ENCODE measurements at regions of chr12 and their contacts with region 1.

Region 1: DNA sequence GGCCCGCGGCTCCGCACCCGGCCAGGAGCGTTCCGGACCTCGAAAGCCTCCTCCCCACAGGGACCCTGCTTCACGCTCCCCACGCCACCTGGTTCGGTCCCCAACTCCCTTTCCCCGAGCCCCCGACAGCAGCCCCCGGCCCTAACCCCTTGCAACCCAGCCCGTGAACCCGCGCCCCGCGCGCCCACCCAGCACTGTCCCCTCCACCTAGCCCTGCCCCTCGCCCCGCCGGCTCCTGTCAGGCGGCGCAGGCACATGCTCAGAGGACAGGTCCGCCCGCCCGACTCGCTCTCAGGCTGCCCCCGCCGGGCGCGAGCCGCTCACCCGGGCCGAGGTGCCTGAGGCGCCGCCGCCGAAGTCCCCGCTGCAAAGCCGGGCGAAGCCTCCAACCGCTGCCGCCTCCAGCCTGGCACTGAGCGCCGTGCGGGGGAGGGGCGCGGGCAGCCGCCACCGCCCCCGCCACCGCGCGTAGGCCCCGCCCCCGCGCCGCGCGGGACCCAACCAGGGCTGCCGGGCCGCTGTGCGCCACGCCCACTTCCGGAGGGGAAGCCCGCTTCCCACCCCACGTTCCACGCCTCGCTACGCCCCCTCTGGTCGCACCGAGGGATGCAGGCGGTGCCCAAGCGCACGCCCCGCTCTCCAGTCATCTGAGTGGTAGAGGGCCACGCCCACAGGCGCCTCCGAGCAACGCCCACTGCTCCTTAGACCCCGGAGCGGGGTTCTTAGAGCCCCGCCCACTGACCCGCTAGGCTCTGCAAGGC is at the start of gene CORO1C:
- DNase-seq: peak; percentile 97 to 99 (median 98)
- H3K4me3 ChIP-seq: peak within 1 kb of the TSS; percentile 79 to 92 (median 88)
- H3K4me3 Mint-ChIP-seq: peak within 1 kb of the TSS; percentile 97
- H3K27ac ChIP-seq: peak within 1 kb of the TSS; percentile 92 to 99
- H3K27ac Mint-ChIP-seq: peak within 1 kb of the TSS; percentile 98 to 100 (median 99)
- H3K4me1 ChIP-seq: peaks cover 67 to 83% of the 10 kb centered on the region in 2 donors
- H3K4me1 Mint-ChIP-seq: peaks cover 73% of the 10 kb centered on the region
- H3K27me3 ChIP-seq: no peaks in the 10 kb centered on the region
- H3K27me3 Mint-ChIP-seq: peaks cover 0 to 3% (median 2%) of the 10 kb centered on the region in 3 donors
- CTCF ChIP-seq: peak; percentile 97
- polyA plus RNA-seq, gene CORO1C: 77.5 to 285 (median 229) TPM

Region 2: DNA sequence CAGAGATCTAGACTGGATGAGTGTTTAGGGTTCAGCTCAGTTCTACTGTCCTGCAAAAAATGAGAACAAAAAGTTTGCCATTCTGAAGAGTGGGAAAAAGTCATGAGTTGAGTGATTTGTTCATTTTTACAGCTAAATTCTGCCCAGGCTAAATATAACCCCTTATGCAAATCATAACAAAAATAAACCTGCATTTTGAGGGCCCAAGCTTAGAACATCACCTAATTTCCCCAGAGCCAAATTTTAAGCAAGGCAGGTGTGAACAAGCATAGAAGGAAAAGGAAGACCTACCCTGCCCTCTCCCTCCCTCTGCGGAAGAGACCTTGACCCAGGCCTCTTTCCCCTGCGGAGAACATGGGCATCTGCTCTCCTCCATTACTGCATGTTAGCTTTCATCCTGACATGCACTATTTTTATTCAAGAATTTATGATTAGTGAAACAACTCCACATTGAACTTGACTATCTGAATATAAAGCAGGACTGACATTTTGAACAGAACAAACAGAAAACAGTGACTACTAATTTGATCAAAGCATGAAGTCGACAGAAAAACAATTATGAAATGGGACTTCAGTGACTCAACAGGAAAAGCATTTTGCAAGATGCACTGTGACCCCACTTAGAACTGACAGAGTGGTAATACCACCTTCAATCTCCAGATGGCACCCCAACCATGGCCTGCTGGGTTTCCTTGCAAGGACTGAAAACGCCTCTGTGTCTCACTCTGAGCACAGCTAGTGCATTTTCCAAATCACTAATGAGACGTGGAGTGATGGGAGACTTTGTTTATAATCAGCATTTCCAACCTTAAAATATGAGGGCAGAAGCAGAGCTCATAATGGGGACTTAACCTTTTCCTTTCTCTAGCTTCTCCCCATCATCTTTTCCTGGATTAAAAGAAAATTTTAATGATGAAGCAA is 66.7 kb before region 1 on chr12:
- intact Hi-C with region 1: loop called in 1 of 2 experiments (anchors 5 kb)
- DNase-seq: peak; percentile 95 to 97 (median 95)
- H3K4me3 ChIP-seq: peak overlapping the region; percentile 5 to 67 (median 43)
- H3K4me3 Mint-ChIP-seq: peak overlapping the region; percentile 61 to 86
- H3K27ac ChIP-seq: peak overlapping the region; percentile 88 to 95
- H3K27ac Mint-ChIP-seq: peak overlapping the region; percentile 97 to 99 (median 99)
- H3K4me1 ChIP-seq: peaks cover 54 to 61% of the 10 kb centered on the region in 2 donors
- H3K4me1 Mint-ChIP-seq: peaks cover 59% of the 10 kb centered on the region
- H3K27me3 ChIP-seq: no peaks in the 10 kb centered on the region
- H3K27me3 Mint-ChIP-seq: no peaks in the 10 kb centered on the region
- CTCF ChIP-seq: peak; percentile 93

Region 3: DNA sequence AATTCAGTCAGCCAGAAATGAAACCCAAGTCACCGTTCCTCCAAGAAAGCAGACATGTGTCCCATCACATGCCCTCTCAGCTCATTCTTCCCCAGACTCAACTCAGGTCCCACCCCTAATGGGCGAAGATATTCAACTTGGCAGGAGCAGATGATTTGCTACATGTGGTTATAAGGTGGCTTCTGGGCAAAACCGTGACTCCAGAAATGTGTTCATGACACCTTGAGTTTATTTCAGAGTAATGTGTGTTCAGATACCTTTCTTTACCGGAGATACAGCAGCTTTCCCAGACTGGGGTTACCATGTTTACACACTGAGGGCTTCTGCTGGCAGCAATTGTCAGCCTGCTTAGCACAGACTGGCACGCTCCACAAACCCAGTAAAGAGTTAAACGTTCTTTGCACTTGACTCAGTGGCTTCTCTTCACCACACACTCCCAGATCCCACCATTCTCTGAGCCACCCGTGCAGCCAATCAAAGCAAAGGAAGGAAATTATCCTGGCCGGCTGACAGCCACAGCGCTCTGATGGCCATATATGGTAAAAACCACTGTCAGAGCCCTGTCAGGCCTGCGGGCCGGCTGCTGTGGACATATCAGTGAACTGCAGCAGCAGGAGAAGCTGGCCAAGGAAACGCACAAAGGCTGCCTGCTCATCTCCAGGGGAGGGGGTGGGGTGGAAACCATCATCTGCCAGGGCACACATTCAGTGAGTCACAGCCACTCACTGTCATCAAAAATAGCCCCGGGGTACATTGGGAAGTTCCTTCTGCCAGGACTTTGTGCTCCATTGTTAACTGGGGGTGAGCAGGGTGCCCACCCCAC is 39.9 kb before region 1 on chr12:
- intact Hi-C with region 1: loop called (anchors 2 to 5 kb)
- DNase-seq: peak; percentile 96 to 99 (median 97)
- H3K4me3 ChIP-seq: peak overlapping the region; percentile 12 to 56 (median 13)
- H3K4me3 Mint-ChIP-seq: peak overlapping the region; percentile 70 to 86
- H3K27ac ChIP-seq: peak overlapping the region; percentile 88 to 98
- H3K27ac Mint-ChIP-seq: peak overlapping the region; percentile 95 to 100 (median 99)
- H3K4me1 ChIP-seq: peaks cover 53 to 66% of the 10 kb centered on the region in 2 donors
- H3K4me1 Mint-ChIP-seq: peaks cover 67% of the 10 kb centered on the region
- H3K27me3 ChIP-seq: no peaks in the 10 kb centered on the region
- H3K27me3 Mint-ChIP-seq: peaks cover 0 to 2% (median 0%) of the 10 kb centered on the region in 3 donors
- CTCF ChIP-seq: peak; percentile 39

Region 4: DNA sequence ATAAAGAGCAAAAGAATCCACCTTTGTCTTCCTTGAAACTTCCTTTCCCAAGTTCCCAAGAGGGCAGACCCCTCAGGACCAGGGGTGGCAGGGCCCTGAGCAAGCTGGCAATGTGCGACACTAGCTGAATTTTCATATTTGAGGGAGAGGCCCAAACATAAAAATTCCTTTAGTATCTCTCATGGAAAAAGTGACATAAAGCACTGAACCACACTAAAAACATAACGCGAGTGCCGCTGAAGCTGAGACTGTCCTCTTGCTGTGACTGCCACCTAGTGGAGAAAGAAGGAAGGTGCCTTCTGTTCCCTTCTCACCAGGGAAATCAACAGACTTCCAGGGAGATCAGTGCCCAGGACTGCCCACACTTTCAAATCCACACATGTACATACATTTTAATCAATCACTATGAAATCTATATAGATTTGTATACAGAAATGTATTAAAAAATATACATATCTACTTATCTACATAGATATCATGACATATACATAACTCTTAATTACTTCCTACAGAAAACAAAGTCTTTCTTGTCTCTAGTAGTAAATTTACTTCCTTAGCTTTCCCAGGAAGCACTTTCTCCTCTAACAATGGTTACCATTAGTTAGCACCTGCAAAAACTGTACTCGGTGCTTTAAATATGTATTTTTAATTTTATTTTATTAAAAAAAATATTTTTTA is 72.3 kb after region 1 on chr12:
- intact Hi-C with region 1: loop called in 1 of 2 experiments (anchors 10 kb)
- DNase-seq: peak; percentile 69 to 81 (median 78)
- H3K4me3 ChIP-seq: no peak overlapping the region
- H3K4me3 Mint-ChIP-seq: no peak overlapping the region
- H3K27ac ChIP-seq: peak overlapping the region in 1 of 2 donors; percentile 4
- H3K27ac Mint-ChIP-seq: peak overlapping the region in 5 of 7 donors; percentile 65 to 90 (median 87)
- H3K4me1 ChIP-seq: peaks cover 3 to 4% of the 10 kb centered on the region in 2 donors
- H3K4me1 Mint-ChIP-seq: peaks cover 4% of the 10 kb centered on the region
- H3K27me3 ChIP-seq: no peaks in the 10 kb centered on the region
- H3K27me3 Mint-ChIP-seq: no peaks in the 10 kb centered on the region
- CTCF ChIP-seq: peak; percentile 90

Region 5: GRCh38 chr12:108856428-108857157 is 125.3 kb after region 1 on chr12:
- intact Hi-C with region 1: loop called in 1 of 2 experiments (anchors 5 kb)
- DNase-seq: peak; percentile 84 to 93 (median 90)
- H3K4me3 ChIP-seq: peak overlapping the region; percentile 79 to 89 (median 82)
- H3K4me3 Mint-ChIP-seq: peak overlapping the region; percentile 97 to 100
- H3K27ac ChIP-seq: peak overlapping the region; percentile 70 to 98
- H3K27ac Mint-ChIP-seq: peak overlapping the region; percentile 94 to 99 (median 98)
- H3K4me1 ChIP-seq: peaks cover 71 to 77% of the 10 kb centered on the region in 2 donors
- H3K4me1 Mint-ChIP-seq: peaks cover 74% of the 10 kb centered on the region
- H3K27me3 ChIP-seq: no peaks in the 10 kb centered on the region
- H3K27me3 Mint-ChIP-seq: peaks cover 0 to 2% (median 0%) of the 10 kb centered on the region in 3 donors
- CTCF ChIP-seq: no peak